ENCODE measurements at regions of chr1 and their contacts with region 1.

Region 1: DNA sequence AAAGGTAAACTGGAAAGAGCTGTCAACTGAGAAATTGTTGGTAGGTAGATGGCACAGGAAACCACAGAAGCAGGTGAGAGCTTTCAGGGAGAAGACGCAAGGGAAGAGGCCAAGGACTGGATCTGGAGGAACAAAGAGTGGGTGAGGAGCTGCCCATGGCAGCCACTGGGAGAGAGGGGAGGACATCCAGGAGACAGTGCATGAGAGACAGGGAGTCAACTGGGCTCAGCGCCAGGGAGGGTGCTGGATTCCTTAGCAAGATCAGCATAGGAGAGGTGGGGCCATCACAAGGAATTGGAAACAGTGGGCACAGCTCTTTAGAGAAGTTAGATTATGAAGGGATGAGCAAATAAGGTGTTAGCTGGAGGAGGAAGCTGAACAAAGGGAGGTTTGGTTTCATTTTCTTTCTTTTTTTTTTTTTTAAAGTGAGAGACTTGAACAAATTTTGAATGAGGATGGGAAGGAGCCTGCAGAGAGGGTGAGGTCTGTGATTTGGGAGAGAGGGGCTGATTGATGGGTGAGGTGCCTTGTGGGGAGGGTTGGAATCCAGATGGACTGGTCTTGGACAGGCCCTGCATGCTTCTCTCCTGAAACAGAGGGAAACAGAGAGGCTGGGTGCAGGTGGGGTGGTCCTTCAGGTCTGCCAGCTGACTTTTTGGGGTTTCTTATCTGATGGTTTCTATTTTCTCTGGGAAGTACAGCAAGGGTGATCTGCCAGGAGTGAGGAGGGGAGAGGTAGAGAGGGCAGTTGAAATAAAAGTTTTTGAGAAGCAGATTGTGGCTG is 5.4 kb downstream of the CYP4B1 start:
- DNase-seq: peak; percentile 37 to 65
- ATAC-seq: no peak
- H3K4me3 ChIP-seq: peak overlapping the region; percentile 18 to 63 (median 42)
- H3K27ac ChIP-seq: peak overlapping the region; percentile 81 to 88 (median 84)
- H3K4me1 ChIP-seq: peaks cover 0 to 30% of the 10 kb centered on the region in 2 donors
- H3K27me3 ChIP-seq: no peaks in the 10 kb centered on the region
- CTCF ChIP-seq: no peak
- POLR2A ChIP-seq: no peak

Region 2: DNA sequence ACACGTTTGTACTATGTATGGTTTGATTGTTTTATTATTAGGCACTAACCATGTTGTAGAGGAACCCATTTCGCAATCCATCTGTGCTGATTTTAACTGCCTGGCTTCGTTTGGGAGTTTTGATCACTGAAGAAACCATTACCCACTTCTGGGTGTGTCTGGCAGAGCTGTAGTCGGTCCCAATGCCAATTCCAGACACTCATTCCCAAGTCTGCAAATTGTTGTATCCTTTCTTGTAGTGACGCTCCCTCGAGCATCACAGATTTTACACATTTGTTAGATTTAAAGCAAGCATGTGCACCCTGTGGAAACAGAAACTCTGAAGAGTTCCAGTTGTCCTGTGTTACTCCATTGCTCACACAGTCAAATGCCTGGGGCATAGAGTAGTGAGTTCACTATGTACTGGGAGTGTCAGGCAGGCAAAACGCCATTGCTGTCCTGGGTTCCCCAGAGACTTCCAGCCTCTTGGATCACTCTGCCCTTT is 54.3 kb before region 1 on chr1:
- in situ Hi-C with region 1: no loop called
- intact Hi-C with region 1: loop called (anchors 5 kb)
- DNase-seq: peak; percentile 47 to 70
- ATAC-seq: peak; percentile 79 to 80
- H3K4me3 ChIP-seq: no peak overlapping the region
- H3K27ac ChIP-seq: peak overlapping the region; percentile 45 to 74 (median 63)
- H3K4me1 ChIP-seq: peaks cover 0 to 19% of the 10 kb centered on the region in 2 donors
- H3K27me3 ChIP-seq: no peaks in the 10 kb centered on the region
- CTCF ChIP-seq: no peak
- POLR2A ChIP-seq: peak in 1 of 2 donors; percentile 17

Region 3: DNA sequence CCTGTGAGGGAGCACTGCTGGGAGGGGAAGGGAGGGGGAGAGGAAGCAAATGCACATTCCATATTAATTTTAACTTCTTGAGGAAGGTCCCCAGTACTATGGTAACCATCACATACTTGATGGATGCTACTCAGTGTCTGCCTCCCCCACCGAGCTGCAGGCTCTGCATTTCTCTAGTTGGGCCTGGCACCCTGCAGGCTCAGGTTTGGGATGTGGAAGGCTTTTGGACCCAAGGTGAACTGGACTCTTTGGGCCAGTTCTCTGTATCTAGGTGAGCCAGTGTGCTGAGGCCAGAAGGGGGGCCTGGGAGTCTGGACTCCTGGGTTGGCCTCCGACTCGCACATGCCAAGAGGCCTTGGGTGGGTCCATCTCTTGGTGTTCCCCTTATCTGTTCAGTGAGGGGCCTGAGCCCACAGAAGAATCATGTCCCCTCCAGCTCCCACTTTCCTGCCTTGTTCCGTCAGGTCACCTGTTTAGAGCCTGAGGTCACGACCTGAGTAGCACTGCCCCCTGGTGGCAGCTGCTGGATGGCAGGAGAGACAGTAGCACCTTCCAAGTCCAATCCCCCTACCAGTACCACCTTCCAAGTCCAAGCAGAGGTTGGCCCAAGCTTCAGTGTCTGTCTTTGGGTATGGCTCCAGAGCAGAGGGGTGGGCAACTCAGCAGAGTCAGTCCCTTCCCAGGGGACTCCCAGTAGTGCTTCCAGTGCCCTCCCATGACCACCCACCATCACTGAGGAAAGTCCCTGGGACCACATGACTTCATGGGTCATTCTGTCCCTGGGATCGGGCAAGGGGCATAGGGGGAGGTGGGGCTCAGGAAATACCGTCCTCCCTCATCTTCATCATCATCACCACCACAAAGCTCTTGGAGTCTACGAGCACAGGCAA is 951.1 kb after region 1 on chr1:
- in situ Hi-C with region 1: no loop called
- intact Hi-C with region 1: no loop called
- DNase-seq: no peak
- ATAC-seq: no peak
- H3K4me3 ChIP-seq: no peak overlapping the region
- H3K27ac ChIP-seq: no peak overlapping the region
- H3K4me1 ChIP-seq: no peaks in the 10 kb centered on the region
- H3K27me3 ChIP-seq: no peaks in the 10 kb centered on the region
- CTCF ChIP-seq: peak in 2 of 5 experiments; percentile 6 to 9
- POLR2A ChIP-seq: no peak

Measured in gastrocnemius medialis (tissue), 4 donors.